ENCODE measurements at regions of chr10 and their contacts with region 1.

Region 1: GRCh38 chr10:8513155-8514147 is 459.0 kb downstream of the GATA3 start:
- DNase-seq: peak; percentile 69
- H3K4me3 ChIP-seq: no peak overlapping the region
- H3K27ac ChIP-seq: peak overlapping the region; percentile 86
- H3K4me1 ChIP-seq: peaks cover 26% of the 10 kb centered on the region
- H3K27me3 ChIP-seq: no peaks in the 10 kb centered on the region
- CTCF ChIP-seq: no peak; the same call in 1 of the 2 replicates

Region 2: GRCh38 chr10:8498884-8499283 is 14.6 kb before region 1 on chr10:
- CTCF ChIA-PET with region 1: no interaction called
- POLR2A ChIA-PET with region 1: interaction called, 11 read pairs
- intact Hi-C with region 1: no loop called
- DNase-seq: no peak
- H3K4me3 ChIP-seq: no peak overlapping the region
- H3K27ac ChIP-seq: no peak overlapping the region
- H3K4me1 ChIP-seq: no peaks in the 10 kb centered on the region
- H3K27me3 ChIP-seq: no peaks in the 10 kb centered on the region
- CTCF ChIP-seq: no peak

Region 3: DNA sequence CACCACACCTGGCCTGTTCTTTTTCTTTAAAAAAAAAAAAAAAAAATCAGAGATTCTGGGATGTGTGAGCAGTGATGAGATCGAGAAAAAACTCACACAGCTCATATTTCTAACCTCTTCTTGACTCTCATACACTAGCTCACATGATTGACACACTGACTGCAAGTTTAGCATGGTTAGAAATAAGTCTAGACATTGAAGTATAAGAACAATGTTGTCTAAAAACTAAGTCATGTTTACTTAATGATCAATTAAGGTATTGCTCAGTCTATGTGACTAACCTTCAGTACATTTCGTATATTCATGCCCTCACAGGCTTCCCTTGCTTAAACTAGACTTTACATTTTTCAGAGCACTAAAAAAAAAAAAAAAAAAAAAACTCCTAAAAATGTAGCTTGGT is 316.1 kb after region 1 on chr10:
- CTCF ChIA-PET with region 1: no interaction called
- POLR2A ChIA-PET with region 1: no interaction called
- intact Hi-C with region 1: no loop called
- DNase-seq: no peak
- H3K4me3 ChIP-seq: no peak overlapping the region
- H3K27ac ChIP-seq: no peak overlapping the region
- H3K4me1 ChIP-seq: no peaks in the 10 kb centered on the region
- H3K27me3 ChIP-seq: no peaks in the 10 kb centered on the region
- CTCF ChIP-seq: no peak